ENCODE measurements at regions of chr18 and their contacts with region 1.

Region 1: GRCh38 chr18:51107082-51107481 is 77.1 kb downstream of the SMAD4 start:
- DNase-seq: no peak

Region 2: DNA sequence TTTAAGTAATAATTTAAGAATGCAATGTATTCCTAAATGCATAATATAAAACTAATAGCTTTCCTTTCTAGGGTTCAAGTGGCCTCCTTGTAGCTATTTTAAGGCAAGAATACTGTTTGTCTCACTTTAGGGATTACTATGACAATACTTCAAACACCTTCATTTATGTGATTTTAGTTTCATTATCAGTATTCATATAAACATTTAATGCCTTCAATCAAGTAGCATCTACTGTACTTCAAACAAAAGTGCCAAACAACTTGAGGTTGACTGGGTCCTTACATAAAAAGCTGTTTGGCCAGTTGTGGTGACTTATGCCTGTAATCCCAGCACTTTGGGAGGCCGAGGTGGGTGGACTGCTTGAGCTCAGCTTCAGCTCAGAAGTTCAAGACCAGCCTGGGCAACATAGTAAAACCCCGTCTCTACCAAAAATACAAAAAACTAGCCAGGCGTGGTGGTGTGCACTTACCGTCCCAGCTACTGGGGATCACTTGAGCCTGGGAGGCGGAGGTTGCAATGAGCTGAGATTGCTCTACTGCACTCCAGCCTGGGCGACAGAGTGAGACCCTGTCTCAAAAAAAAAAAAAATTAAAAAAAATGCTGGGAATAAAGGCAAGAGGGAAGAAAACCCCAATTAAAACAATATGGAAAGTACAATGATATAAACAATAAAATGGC is 81.1 kb after region 1 on chr18:
- intact Hi-C with region 1: no loop called
- DNase-seq: no peak

Region 3: DNA sequence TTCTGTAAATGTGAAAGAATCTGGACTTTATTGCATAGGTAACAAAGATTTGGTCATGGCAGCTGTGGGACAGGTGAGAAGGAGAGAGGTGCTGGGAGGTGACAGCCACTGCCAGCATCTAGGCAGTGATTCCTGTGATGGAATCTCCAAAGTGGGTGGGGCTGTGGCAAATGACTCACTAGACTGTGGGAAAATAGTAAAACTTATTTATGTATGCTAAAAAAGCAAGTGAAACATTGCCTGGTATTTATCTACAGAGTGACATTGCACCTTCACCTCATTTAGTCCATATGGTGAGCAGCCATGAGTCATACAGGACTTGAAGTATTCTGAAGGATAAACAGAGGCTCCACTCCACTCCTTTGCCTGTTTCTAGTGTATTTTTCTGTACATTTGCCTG is 235.7 kb after region 1 on chr18:
- intact Hi-C with region 1: no loop called
- DNase-seq: no peak

Region 4: DNA sequence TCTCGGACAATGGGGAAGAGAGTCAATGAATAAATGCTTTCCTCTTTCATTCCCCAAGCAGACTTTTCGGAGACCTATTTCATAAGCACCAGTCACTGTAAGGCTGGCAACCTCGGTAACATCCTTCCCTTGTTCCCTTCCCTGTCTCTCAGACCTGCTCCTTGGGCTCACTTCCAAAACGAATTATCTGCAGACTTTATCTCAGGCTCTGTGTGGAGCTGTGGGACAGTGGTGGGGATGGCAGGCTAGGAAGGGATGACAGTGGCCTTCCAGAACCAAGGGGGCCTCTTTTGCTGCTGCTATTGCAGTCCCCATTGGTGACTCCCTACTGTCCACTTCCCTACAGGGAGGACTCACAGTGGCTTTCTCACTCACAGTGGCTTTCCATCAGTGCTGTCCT is 276.0 kb after region 1 on chr18:
- intact Hi-C with region 1: loop called (anchors 5 kb)
- DNase-seq: no peak